Activated CD4-positive, alpha-beta memory T cell treated with anti-CD3 and anti-CD28 coated beads for 36 hours (primary cell): ENCODE measurements at regions of chr5 and their contacts with region 1.

Region 1: GRCh38 chr5:143403593-143404415 is at the start of gene NR3C1:
- DNase-seq: peak; percentile 87
- H3K4me3 Mint-ChIP-seq: peak within 1 kb of the TSS; percentile 89
- H3K27ac Mint-ChIP-seq: peak within 1 kb of the TSS; percentile 100
- H3K4me1 Mint-ChIP-seq: peaks cover 47% of the 10 kb centered on the region
- H3K27me3 Mint-ChIP-seq: no peaks in the 10 kb centered on the region
- total RNA-seq, gene NR3C1: 48.6 to 53.9 TPM

Region 2: DNA sequence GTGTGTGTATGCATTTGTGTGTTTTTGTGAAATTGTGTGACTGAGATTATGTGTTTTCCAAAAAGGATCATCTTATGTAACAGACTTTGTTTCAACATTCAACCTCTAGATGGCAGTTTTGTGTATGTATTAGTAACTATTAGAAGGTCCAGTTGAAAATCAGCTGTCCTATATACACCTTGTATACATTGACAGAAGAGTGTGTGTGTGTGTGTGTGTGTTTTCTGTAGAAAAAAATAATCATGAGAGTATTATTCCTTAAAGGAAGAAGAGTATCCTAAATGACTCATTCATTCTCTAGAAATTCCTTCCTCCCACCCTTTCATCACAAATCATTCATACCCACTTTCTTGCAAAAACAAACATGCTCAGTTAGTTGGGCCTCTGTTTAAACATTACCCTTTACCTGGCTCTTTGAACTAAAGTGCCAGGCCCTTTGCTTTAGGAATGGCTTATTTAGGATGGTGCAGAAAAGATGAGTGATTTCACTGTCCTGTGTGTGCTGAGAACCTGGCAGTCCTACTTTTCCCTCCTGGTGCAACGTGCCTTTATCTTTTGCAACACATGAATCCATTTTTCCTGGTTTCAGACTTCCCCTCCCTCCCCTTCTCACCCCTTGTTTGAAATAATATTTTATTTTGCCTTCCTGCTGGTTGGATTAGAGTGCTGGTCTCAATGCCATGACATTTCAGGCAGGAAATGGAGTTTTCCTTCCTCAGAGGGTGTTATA is 481.4 kb before region 1 on chr5:
- CTCF ChIA-PET with region 1: interaction called, 3 read pairs
- POLR2A ChIA-PET with region 1: no interaction called
- intact Hi-C with region 1: loop called (anchors 10 kb)
- DNase-seq: no peak
- H3K4me3 Mint-ChIP-seq: no peak overlapping the region
- H3K27ac Mint-ChIP-seq: no peak overlapping the region
- H3K4me1 Mint-ChIP-seq: peaks cover 28% of the 10 kb centered on the region
- H3K27me3 Mint-ChIP-seq: no peaks in the 10 kb centered on the region

Region 3: DNA sequence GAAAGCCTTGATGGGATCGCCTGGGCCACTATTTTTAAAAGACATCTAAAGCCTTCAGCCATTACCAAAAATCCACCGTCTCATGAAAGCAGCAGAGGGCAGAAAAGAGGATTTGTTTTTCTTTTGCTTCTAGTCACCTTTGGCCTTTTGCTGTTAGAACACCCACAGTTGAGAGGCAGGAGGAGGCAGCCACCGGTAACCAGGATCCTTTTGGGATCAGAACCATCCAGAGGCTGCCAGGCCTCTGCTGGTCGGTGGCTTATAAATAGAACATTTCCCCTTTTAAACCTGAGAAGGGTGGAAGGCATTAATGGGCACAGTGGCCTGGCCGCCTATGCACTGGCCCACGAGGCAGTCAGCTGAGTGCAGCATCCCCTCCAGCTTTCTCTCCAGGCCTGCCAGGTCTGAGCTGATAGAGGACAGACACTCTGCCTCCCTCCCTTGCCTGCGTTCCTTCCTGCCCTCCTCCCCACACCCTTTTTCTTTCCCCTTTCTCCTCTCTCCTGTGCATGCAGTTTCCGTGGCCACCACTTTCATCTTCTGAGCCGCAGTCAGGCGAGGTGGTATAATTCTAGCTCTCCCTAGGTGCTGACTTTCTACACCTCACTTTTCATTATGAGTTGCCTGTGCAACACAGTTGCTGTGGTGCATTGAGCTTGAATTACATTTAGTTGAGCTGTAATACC is 380.2 kb before region 1 on chr5:
- CTCF ChIA-PET with region 1: interaction called, 14 read pairs
- POLR2A ChIA-PET with region 1: interaction called, 4 read pairs
- intact Hi-C with region 1: no loop called
- DNase-seq: peak; percentile 85
- H3K4me3 Mint-ChIP-seq: no peak overlapping the region
- H3K27ac Mint-ChIP-seq: peak overlapping the region; percentile 59
- H3K4me1 Mint-ChIP-seq: peaks cover 53% of the 10 kb centered on the region
- H3K27me3 Mint-ChIP-seq: no peaks in the 10 kb centered on the region

Region 4: DNA sequence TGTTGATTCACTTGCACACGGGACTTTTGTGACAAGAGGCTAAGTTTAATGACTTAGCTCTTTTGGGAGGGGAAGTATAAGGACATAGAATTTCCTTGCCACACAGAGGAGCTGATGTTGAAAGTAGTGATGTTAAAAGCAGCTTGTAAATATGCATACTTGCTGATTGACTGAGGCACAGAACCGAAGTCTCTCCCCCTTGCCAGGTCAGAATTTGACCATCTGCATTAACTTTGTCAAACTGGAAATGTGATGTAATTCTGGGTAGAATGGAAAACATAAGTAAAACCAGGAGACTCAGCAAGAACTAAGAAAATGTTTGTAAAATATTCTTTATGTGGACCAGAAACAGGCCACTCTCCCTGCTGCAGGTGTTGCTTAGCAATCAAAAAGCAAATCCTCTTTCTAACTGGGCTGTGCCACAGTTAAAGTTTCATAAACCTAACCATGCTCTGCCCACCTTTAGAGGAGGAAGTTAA is 284.5 kb before region 1 on chr5:
- CTCF ChIA-PET with region 1: no interaction called
- POLR2A ChIA-PET with region 1: no interaction called
- intact Hi-C with region 1: loop called (anchors 5 kb)
- DNase-seq: peak; percentile 27
- H3K4me3 Mint-ChIP-seq: no peak overlapping the region
- H3K27ac Mint-ChIP-seq: peak overlapping the region; percentile 82
- H3K4me1 Mint-ChIP-seq: peaks cover 41% of the 10 kb centered on the region
- H3K27me3 Mint-ChIP-seq: no peaks in the 10 kb centered on the region

Region 5: GRCh38 chr5:143355720-143356119 is 48.1 kb before region 1 on chr5:
- CTCF ChIA-PET with region 1: interaction called, 7 read pairs
- POLR2A ChIA-PET with region 1: no interaction called
- intact Hi-C with region 1: loop called (anchors 2 kb)
- DNase-seq: peak; percentile 50
- H3K4me3 Mint-ChIP-seq: no peak overlapping the region
- H3K27ac Mint-ChIP-seq: no peak overlapping the region
- H3K4me1 Mint-ChIP-seq: peaks cover 75% of the 10 kb centered on the region
- H3K27me3 Mint-ChIP-seq: no peaks in the 10 kb centered on the region

Region 6: DNA sequence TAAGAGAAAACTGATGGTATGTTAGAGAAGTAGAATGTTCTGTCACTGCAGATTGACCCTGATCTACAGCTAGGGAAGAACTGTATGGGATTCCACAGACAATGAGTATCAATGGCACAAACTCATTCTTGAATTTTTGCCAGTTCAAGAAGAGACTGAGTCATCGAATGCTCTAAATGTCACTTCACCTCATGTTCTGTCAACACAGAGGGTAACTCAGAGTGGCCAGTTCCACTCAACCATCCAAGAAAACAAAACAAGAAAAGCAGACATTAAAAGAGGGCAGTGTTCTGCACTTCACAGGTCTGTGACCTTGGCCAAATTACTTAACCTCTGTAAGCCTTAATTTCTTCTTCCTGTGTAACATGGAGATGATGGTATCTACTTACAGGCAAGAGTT is 276.0 kb after region 1 on chr5:
- CTCF ChIA-PET with region 1: no interaction called
- POLR2A ChIA-PET with region 1: no interaction called
- intact Hi-C with region 1: loop called (anchors 2 kb)
- DNase-seq: no peak
- H3K4me3 Mint-ChIP-seq: no peak overlapping the region
- H3K27ac Mint-ChIP-seq: no peak overlapping the region
- H3K4me1 Mint-ChIP-seq: peaks cover 23% of the 10 kb centered on the region
- H3K27me3 Mint-ChIP-seq: peaks cover under 1% of the 10 kb centered on the region